ENCODE measurements at regions of chr10 and their contacts with region 1.

Region 1: GRCh38 chr10:71255808-71256660 is 43.7 kb downstream of the UNC5B start:
- DNase-seq: peak; percentile 89
- H3K4me3 Mint-ChIP-seq: peak overlapping the region; percentile 62
- H3K27ac Mint-ChIP-seq: peak overlapping the region; percentile 28
- H3K4me1 Mint-ChIP-seq: peaks cover 56% of the 10 kb centered on the region
- H3K27me3 Mint-ChIP-seq: no peaks in the 10 kb centered on the region
- CTCF ChIP-seq: no peak

Region 2: DNA sequence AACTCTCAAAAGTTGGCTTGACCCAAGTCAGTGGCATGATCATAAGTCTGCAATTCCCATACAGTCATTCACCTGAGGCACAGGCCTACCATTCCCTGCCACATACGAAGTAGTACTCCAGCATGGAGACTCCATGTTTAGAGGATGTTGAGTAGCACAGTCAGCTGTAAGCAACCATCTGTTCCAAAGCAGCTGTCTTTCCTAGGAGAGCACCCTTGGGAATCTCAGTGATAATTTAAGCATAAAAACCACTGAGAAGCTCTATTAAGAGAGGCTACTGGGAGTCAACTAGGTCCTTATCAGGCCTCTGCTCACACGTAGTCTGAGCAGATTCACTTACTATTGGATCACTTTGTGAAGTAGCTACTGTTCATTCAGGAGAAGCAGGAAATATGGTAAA is 105.2 kb before region 1 on chr10:
- CTCF ChIA-PET with region 1: no interaction called
- POLR2A ChIA-PET with region 1: no interaction called
- intact Hi-C with region 1: no loop called
- DNase-seq: no peak
- H3K4me3 Mint-ChIP-seq: no peak overlapping the region
- H3K27ac Mint-ChIP-seq: no peak overlapping the region
- H3K4me1 Mint-ChIP-seq: no peaks in the 10 kb centered on the region
- H3K27me3 Mint-ChIP-seq: peaks cover 8% of the 10 kb centered on the region
- CTCF ChIP-seq: no peak

Region 3: DNA sequence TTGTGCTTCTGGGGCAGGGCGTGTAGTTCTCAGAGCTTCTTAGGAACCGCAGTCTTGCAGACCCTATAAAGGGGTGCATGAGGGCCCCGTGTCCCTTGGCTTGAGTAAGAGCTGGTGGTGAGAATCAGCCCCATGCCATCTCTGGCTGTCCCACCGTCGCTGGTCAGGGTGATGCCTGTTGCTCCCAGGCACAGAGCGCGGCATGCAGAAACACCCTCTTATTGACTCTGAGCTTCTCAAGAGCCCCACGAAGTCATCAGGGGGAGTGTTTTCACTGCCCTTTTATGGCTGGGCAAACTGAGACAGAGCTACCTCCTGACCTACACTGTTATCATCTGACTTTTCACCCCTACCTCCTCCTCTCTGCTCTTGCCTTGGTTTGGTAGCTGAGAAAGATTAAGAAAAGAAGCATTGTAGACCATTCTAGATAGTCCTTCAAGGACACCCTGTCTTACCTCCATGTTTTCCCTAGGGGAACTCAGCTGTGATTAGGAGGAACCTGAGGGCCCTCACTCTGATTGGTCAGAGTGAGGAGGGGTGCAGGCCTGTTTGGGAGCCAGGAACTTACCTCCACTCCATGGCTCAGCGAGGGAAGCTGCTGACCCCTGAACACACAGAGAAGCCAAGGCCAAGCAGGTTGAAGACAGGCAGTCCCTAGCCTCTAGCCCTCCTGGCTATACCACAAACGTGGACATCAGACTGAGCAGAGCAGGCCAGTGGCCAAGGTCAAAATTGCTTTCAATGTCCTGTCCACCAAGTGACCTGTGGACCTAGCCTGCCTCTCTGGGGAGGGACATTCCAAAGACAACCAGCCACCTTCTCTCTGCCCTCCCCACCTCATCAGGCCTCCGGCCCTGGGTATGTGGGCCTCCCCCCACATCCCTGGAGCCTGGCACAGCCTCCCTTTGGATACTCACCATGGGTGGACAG is 26.0 kb before region 1 on chr10:
- CTCF ChIA-PET with region 1: no interaction called
- POLR2A ChIA-PET with region 1: no interaction called
- intact Hi-C with region 1: no loop called
- DNase-seq: no peak
- H3K4me3 Mint-ChIP-seq: no peak overlapping the region
- H3K27ac Mint-ChIP-seq: no peak overlapping the region
- H3K4me1 Mint-ChIP-seq: peaks cover 10% of the 10 kb centered on the region
- H3K27me3 Mint-ChIP-seq: no peaks in the 10 kb centered on the region
- CTCF ChIP-seq: no peak

Region 4: DNA sequence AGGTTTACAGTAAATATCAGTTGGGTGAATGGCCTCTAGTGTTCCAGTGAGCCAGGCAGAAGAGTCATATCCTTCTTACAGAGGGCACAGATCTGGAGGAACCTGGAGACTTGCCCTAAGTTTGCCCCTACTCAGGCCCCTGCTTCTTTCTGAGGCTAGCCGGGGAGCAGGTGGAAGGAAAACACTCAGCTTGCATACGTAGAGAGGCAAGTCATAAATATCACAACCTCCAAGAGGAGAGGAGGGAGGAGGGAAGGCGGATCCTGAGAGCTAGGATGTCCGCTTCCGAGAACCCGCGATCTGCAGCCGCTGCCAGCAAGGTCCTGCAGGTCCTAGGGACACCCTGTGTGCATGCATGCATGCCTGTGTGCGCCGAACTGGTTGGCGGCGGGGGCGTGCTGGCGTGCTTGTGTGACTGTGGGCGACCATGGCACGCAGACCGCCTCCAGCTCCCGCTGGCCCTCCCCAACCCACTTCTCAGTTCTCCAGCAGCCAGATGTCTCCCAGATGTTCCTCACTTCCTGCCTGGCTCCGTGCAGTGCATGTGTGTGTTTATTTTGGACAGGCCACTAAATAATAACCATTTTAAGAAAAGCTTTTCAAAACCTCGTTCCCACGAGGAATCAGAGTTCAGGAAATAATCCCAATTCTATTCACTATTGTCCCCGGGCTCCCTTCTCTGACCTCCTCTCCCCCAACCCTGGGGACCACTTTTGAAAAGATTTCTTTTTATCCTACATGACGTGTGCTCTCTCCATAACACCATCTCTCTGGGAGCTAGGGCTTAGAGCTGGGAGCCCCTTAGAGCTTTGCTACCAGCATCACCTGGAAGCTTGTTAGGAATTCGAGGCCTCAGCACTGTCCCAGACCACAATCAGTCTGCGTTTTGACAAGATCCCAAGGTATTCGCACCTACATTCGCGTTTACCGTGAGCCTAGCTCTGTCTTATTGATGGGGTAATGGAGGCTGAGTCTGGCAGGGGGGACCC is 11.3 kb before region 1 on chr10:
- CTCF ChIA-PET with region 1: interaction called, 22 read pairs
- POLR2A ChIA-PET with region 1: interaction called, 123 read pairs
- intact Hi-C with region 1: loop called (anchors 2 kb)
- DNase-seq: peak; percentile 58
- H3K4me3 Mint-ChIP-seq: peak overlapping the region; percentile 38
- H3K27ac Mint-ChIP-seq: peak overlapping the region; percentile 95
- H3K4me1 Mint-ChIP-seq: peaks cover 68% of the 10 kb centered on the region
- H3K27me3 Mint-ChIP-seq: no peaks in the 10 kb centered on the region
- CTCF ChIP-seq: no peak

Region 5: GRCh38 chr10:71270301-71271220 is 14.5 kb after region 1 on chr10:
- CTCF ChIA-PET with region 1: interaction called, 16 read pairs
- POLR2A ChIA-PET with region 1: interaction called, 5 read pairs
- intact Hi-C with region 1: no loop called
- DNase-seq: peak; percentile 72
- H3K4me3 Mint-ChIP-seq: no peak overlapping the region
- H3K27ac Mint-ChIP-seq: peak overlapping the region; percentile 90
- H3K4me1 Mint-ChIP-seq: peaks cover 44% of the 10 kb centered on the region
- H3K27me3 Mint-ChIP-seq: no peaks in the 10 kb centered on the region
- CTCF ChIP-seq: peak; percentile 46